ENCODE measurements at regions of chr12 and their contacts with region 1.

Region 1: GRCh38 chr12:66035288-66035966 is 95.1 kb downstream of the LLPH start:
- DNase-seq: peak; percentile 52
- H3K4me3 ChIP-seq: no peak overlapping the region
- H3K27ac ChIP-seq: peak overlapping the region; percentile 26
- H3K4me1 ChIP-seq: peaks cover 19% of the 10 kb centered on the region
- H3K27me3 ChIP-seq: no peaks in the 10 kb centered on the region
- CTCF ChIP-seq: peak; percentile 55 to 74

Region 2: GRCh38 chr12:65640489-65640901 is 394.9 kb before region 1 on chr12:
- CTCF ChIA-PET with region 1: no interaction called
- dilution Hi-C with region 1: no loop called
- in situ Hi-C with region 1: no loop called
- intact Hi-C with region 1: no loop called
- DNase-seq: no peak
- H3K4me3 ChIP-seq: no peak overlapping the region
- H3K27ac ChIP-seq: no peak overlapping the region
- H3K4me1 ChIP-seq: peaks cover 17% of the 10 kb centered on the region
- H3K27me3 ChIP-seq: no peaks in the 10 kb centered on the region
- CTCF ChIP-seq: no peak

Region 3: DNA sequence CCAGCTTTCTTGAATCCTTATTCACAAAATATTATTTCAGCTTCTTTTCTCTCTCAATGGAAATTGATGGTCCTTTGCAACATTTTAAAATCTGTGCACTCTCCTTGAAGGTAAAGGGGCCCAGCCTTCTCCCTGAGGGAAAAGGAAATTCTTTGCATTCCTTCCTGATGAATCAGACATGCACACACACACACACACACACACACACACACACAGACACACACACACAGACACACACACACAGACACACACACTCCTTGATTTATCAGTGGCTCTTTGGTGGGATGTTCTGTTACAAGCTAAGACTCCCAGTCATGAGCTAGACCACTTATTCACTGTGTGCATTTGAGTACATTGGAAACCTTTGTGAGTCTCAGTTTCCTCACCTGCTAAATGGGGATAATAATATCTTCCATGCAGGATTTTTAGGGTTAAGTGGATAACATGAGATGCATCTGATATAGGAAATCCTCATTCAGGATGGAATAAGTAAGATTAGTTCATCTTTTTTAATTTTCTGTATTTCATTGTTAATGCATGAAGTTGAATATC is 256.3 kb before region 1 on chr12:
- CTCF ChIA-PET with region 1: no interaction called
- dilution Hi-C with region 1: no loop called
- in situ Hi-C with region 1: no loop called
- intact Hi-C with region 1: loop called (anchors 2 kb)
- DNase-seq: peak; percentile 45
- H3K4me3 ChIP-seq: no peak overlapping the region
- H3K27ac ChIP-seq: peak overlapping the region; percentile 53
- H3K4me1 ChIP-seq: peaks cover 47% of the 10 kb centered on the region
- H3K27me3 ChIP-seq: no peaks in the 10 kb centered on the region
- CTCF ChIP-seq: no peak

Region 4: GRCh38 chr12:65881965-65882413 is 153.4 kb before region 1 on chr12:
- CTCF ChIA-PET with region 1: no interaction called
- dilution Hi-C with region 1: no loop called
- in situ Hi-C with region 1: no loop called
- intact Hi-C with region 1: loop called (anchors 5 kb)
- DNase-seq: no peak
- H3K4me3 ChIP-seq: no peak overlapping the region
- H3K27ac ChIP-seq: no peak overlapping the region
- H3K4me1 ChIP-seq: peaks cover 46% of the 10 kb centered on the region
- H3K27me3 ChIP-seq: no peaks in the 10 kb centered on the region
- CTCF ChIP-seq: peak in 1 of 2 donors; percentile 22

Region 5: DNA sequence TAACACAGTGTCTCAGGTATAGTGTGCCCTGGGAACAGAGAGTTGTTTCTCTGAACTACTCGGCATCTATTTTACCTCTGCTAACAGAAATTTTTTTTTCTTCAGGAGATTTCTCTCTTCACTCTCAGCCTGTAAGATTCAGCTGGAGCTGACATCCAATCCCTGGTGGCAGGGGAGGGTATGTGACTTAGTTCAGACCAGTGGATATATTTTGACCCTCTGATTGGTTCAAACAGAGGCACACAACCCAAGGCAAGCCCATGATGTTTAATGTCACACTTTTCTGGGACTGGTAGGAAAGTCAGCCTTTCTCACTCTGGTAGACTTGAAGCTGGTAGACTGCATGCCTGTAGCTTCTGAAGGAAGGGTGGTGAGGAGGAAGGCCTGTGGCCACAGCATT is 63.3 kb before region 1 on chr12:
- CTCF ChIA-PET with region 1: no interaction called
- dilution Hi-C with region 1: no loop called
- in situ Hi-C with region 1: no loop called
- intact Hi-C with region 1: loop called (anchors 5 kb)
- DNase-seq: no peak
- H3K4me3 ChIP-seq: no peak overlapping the region
- H3K27ac ChIP-seq: no peak overlapping the region
- H3K4me1 ChIP-seq: no peaks in the 10 kb centered on the region
- H3K27me3 ChIP-seq: no peaks in the 10 kb centered on the region
- CTCF ChIP-seq: no peak

Region 6: DNA sequence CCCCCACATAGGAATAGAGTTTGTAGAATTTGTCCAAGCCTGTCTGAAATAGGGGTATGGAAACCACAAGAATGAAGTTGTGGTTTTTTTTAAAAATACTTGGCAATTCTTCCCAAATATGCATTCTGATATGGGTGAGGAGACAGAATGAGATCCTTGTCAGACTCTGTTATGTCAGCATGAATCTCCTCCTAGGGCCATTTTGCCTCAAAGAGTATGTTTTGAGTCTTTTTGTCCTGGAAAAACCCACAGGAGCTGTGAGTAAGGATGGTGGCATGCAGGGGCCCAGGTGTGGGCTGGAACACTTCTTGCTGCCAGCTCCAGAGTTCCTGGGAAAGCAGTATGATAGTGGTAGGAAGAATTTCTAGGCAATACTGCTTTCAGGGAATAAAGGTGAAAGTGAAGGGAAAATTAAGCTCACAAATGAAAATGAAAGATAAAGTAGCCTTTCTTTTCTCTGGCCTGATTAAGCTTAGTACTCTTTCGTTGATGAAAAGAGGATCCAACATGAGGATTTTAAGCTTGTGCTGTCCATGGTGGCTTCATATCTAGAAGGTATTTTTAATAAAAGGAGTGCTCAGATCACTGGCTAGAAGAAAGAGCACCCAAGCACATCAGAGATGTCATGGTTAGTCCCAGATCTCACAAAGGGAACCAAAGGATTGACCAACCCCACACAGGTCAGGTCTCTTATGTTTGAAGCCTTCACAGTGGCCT is 35.7 kb before region 1 on chr12:
- CTCF ChIA-PET with region 1: no interaction called
- dilution Hi-C with region 1: no loop called
- in situ Hi-C with region 1: no loop called
- intact Hi-C with region 1: no loop called
- DNase-seq: peak; percentile 91
- H3K4me3 ChIP-seq: no peak overlapping the region
- H3K27ac ChIP-seq: peak overlapping the region; percentile 58
- H3K4me1 ChIP-seq: peaks cover 53% of the 10 kb centered on the region
- H3K27me3 ChIP-seq: no peaks in the 10 kb centered on the region
- CTCF ChIP-seq: no peak

Region 7: DNA sequence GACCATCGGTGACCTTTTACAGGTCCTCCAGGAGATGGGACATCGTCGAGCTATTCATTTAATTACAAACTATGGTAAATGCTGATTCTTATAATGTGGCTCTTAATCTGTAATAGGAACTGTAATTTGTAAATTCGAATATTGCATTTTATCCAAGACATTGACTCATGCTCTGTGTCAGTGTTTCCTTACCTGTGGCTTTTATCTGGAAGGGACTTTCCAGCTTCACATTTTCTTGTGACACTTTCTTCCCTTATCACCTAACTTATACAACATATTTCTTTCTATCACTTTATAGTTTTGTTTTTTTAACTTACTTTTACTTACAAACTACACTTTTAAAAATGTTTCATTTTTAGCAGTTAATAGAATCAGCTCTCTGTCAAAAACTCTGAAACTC is 168.4 kb after region 1 on chr12:
- CTCF ChIA-PET with region 1: no interaction called
- dilution Hi-C with region 1: no loop called
- in situ Hi-C with region 1: no loop called
- intact Hi-C with region 1: no loop called
- DNase-seq: peak; percentile 21
- H3K4me3 ChIP-seq: no peak overlapping the region
- H3K27ac ChIP-seq: no peak overlapping the region
- H3K4me1 ChIP-seq: no peaks in the 10 kb centered on the region
- H3K27me3 ChIP-seq: no peaks in the 10 kb centered on the region
- CTCF ChIP-seq: no peak

Region 8: GRCh38 chr12:66584673-66585072 is 549.2 kb after region 1 on chr12:
- CTCF ChIA-PET with region 1: no interaction called
- dilution Hi-C with region 1: no loop called
- in situ Hi-C with region 1: no loop called
- intact Hi-C with region 1: no loop called
- DNase-seq: peak; percentile 35
- H3K4me3 ChIP-seq: no peak overlapping the region
- H3K27ac ChIP-seq: no peak overlapping the region
- H3K4me1 ChIP-seq: no peaks in the 10 kb centered on the region
- H3K27me3 ChIP-seq: no peaks in the 10 kb centered on the region
- CTCF ChIP-seq: no peak

Measured in mammary epithelial cell (primary cell).